Common myeloid progenitor, CD34-positive (primary cell): ENCODE measurements at regions of chr14 and their contacts with region 1.

Region 1: DNA sequence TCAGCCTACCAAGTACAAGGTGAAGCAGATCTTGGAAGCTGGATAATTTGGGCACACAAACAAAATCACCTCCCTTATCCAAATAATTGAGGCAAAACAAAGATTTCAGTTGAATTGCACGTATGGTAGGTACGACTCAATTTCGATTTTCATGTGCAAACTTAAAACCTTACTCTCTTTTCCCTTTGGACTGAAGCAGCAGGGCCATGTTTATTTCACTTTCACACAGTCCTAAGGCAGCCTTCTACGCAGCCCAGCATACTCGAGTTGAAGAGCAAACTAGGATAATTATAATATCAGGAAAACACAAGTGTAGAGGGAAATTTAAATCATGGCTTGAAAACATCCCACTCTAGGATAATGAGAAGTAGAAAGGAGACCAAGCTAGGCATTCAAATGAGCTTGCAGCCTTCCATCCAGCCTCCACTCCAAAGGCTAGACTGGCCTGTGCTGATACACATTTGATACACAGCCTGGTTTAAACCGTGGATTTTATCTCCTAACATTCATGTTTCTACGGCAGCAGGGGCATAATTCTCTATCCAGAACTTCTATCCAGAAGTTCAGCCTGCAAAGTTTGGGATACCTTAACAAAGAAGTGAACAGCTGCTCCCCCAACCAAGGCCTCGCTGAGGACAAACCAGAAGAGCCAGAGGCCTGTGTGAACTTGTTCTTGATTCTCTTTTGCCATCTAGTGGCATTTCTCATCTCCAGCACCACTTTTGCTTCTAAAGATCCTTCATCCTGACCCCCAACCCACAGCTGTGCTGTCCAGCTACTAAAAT is 2.4 kb upstream of the RNASE7 start:
- DNase-seq: peak; percentile 63 to 75 (median 72)
- H3K4me3 ChIP-seq: no peak overlapping the region
- H3K27ac ChIP-seq: no peak overlapping the region
- H3K4me1 ChIP-seq: peaks cover 7 to 30% (median 23%) of the 10 kb centered on the region in 4 experiments
- H3K27me3 ChIP-seq: no peaks in the 10 kb centered on the region

Region 2: GRCh38 chr14:20970983-20971704 is 68.6 kb before region 1 on chr14:
- CTCF ChIA-PET with region 1: interaction called, 11 read pairs
- POLR2A ChIA-PET with region 1: no interaction called
- DNase-seq: peak; percentile 81 to 88 (median 88)
- H3K4me3 ChIP-seq: peak overlapping the region; percentile 47 to 92 (median 79)
- H3K27ac ChIP-seq: no peak overlapping the region
- H3K4me1 ChIP-seq: peaks cover 0 to 14% (median 11%) of the 10 kb centered on the region in 4 experiments
- H3K27me3 ChIP-seq: peaks cover 0 to 2% (median 0%) of the 10 kb centered on the region in 5 experiments

Region 3: DNA sequence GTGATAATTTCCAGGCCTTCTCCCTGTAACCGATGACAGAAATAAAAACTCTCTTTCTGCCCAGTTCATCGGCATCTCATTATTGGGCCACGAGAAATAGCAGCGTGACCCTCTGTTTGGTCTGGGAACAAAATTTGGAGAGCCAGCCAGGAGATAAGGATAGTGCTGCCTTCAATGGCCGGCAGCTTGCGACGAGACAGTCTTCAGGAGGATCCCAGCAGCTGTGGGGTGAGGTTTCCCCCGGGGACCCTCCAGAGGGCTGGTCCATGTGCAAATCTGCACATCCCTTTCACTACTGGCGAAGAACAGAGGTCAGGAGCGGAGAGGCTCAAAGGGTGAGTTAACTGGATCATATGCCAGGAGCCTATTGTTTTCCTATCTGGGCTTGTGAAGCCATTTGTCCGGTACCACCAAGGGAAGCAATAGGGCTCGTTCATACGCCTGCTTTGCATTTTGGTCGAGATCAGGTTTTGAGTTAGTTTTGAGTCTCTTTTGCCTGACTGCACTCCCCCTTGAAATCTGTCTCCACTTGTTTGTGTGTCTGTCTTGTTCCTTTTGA is 35.9 kb before region 1 on chr14:
- CTCF ChIA-PET with region 1: interaction called, 345 read pairs
- POLR2A ChIA-PET with region 1: no interaction called
- DNase-seq: no peak
- H3K4me3 ChIP-seq: no peak overlapping the region
- H3K27ac ChIP-seq: no peak overlapping the region
- H3K4me1 ChIP-seq: no peaks in the 10 kb centered on the region
- H3K27me3 ChIP-seq: no peaks in the 10 kb centered on the region

Region 4: DNA sequence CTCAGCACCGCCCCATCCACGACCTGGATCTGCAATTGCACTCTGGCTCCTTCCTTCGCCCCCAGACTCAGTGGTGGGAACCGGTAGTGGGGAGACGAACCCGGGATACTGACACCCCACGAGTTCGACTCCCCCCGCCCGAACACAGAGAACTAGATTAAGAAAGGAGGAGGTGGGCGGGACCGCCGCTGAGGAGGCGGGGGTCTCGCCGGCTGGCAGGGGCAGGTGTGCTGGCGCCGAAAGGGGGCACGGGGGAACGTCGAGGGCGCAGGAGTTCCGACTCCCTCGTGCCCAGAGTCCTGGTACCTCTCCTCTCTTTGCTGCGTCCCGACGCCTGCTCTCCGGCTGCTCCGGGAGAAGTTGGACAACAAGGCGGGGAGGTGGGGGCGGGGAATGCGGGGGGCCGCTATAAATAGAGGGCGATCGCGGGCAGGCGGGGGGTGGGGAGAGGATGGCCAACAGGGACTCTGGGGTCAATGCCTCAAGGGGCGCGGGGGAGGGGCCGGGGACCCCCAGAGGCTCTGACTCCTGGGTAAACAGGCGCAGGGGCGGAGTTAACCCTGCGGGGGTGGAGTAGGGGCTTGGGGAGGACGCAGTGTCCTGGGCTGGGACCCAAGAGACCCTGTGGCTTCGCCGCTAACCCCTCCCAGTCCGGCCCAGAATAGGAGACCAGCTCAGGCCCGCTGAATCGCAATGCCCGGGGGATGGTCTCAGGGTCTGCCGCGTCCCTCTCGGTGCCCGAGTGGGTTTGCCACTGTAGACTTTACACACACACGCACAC is 14.2 kb before region 1 on chr14:
- CTCF ChIA-PET with region 1: interaction called, 345 read pairs
- POLR2A ChIA-PET with region 1: interaction called, 5 read pairs
- DNase-seq: peak in 1 of 3 donors; percentile 64
- H3K4me3 ChIP-seq: peak overlapping the region; percentile 42 to 89 (median 62)
- H3K27ac ChIP-seq: peak overlapping the region in 1 of 2 experiments; percentile 40
- H3K4me1 ChIP-seq: peaks cover 3 to 26% (median 12%) of the 10 kb centered on the region in 4 experiments
- H3K27me3 ChIP-seq: peaks cover 0 to 23% (median 6%) of the 10 kb centered on the region in 5 experiments

Region 5: DNA sequence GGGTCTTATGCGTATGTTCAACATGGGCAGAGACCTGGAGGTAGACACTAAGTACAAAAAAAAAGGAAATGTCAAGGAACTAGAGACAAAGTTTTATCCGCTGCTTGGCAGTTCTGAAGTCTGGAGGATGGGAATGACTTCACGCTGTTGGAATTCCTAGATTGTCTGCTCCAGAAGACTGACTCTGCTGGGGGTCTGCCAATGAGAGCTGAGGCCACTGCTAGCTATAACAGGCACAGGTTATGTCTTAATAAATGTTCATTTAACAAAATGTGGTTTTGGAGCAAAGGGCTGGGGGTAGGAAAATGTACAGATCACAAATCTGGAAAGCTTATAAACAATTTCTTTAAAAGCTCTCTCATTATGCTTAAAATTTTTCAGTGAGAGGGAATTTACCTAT is 23.7 kb after region 1 on chr14:
- CTCF ChIA-PET with region 1: interaction called, 21 read pairs
- POLR2A ChIA-PET with region 1: no interaction called
- DNase-seq: no peak
- H3K4me3 ChIP-seq: no peak overlapping the region
- H3K27ac ChIP-seq: no peak overlapping the region
- H3K4me1 ChIP-seq: peaks cover under 1 to 2% (median under 1%) of the 10 kb centered on the region in 4 experiments
- H3K27me3 ChIP-seq: peaks cover 0 to 4% (median 1%) of the 10 kb centered on the region in 5 experiments

Region 6: DNA sequence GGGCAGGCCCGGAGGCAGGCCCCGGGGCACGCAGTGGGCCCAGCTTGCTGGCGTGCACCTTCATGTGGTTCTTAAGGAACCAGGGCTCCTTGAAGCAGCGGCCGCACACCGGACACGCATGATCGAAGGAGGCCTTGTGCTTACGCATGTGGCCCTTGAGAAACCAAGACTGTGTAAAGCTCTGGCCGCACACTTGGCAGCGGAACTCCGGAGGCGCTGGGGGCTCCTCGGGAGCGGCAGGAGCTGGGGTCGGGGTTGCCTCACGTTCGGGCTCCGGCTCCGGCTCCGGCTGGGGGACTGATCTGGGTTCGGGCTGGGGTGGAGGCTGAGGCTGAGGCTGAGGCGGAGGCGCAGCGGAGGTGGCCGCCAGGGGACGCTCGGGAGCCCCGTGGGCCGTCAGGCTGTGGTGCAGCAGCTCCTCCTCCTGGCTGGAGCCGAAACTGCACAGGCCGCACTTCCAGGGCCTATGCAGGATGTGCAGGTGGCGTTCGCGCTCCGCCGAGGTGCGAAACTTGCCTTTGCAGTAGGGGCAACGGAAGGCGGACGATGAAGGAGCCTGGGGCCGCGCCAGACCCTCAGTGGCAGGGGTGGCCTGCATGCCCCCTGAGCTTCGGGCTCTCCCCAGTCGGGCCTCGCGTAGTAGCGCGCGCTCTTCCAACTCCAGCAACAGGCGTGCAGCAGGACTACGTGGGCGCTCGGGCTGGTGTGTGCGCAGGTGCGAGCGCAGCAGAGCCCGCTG is 52.7 kb after region 1 on chr14:
- CTCF ChIA-PET with region 1: interaction called, 29 read pairs
- POLR2A ChIA-PET with region 1: no interaction called
- DNase-seq: peak; percentile 82 to 91 (median 85)
- H3K4me3 ChIP-seq: no peak overlapping the region
- H3K27ac ChIP-seq: no peak overlapping the region
- H3K4me1 ChIP-seq: peaks cover 0 to 24% (median 10%) of the 10 kb centered on the region in 4 experiments
- H3K27me3 ChIP-seq: no peaks in the 10 kb centered on the region

Region 7: GRCh38 chr14:21136024-21136423 is 96.2 kb after region 1 on chr14:
- CTCF ChIA-PET with region 1: no interaction called
- POLR2A ChIA-PET with region 1: no interaction called
- DNase-seq: peak; percentile 3 to 37 (median 31)
- H3K4me3 ChIP-seq: no peak overlapping the region
- H3K27ac ChIP-seq: no peak overlapping the region
- H3K4me1 ChIP-seq: no peaks in the 10 kb centered on the region
- H3K27me3 ChIP-seq: no peaks in the 10 kb centered on the region